Activated CD8-positive, alpha-beta T cell treated with anti-CD3 and anti-CD28 coated beads for 36 hours (primary cell): ENCODE measurements at regions of chr10 and their contacts with region 1.

Region 1: DNA sequence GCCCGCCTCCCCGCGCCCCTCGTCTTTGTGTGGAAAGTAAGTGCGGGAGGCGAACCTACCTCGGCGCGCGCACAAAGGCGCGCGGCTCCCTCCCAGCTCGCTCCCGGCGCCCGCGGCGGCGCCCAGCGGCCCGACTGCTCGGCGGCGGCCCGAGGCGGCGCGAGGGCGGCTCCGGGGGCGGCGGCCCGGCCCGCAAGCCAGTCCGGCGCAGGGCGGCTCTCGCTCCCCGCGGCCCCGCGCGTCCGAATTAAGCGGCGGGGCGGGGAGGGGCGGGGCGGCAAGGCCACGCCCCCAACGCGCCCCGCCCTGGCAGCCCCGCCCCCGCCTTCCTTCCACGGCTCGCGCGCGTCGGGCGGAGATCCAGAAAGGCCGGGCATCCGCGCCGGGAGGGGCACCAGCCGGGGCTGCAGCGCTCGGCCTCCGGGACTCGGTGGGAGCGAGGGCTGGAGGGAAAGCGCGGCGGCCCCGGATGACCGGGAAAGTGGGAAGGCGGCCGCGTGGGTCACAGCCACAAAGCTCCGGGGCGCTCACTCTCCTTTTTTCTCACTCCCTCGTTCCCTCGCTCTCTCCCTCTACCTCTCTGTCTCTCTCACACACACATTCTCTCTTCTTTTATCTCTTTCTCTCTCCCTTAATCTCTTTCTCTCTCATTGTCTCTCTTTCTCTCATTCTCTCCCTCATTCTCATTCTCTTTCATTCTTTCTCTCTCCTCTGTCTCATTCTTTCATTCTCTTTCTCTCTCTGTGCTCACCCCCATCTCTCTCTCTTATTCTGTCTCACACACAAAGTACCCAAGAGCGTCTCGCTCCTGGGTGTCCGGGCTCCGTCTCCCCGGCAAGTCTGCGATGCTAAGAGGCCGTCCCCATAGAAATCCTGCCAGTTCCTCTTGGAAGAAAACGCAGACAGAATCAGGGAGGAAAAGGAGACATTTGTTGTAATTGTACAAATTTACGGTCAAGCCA is 170.2 kb downstream of the FAM107B start:
- DNase-seq: peak; percentile 73
- ATAC-seq: peak; percentile 57
- H3K4me3 Mint-ChIP-seq: peak overlapping the region; percentile 84
- H3K27ac Mint-ChIP-seq: peak overlapping the region; percentile 93
- H3K4me1 Mint-ChIP-seq: peaks cover 65% of the 10 kb centered on the region
- H3K27me3 Mint-ChIP-seq: no peaks in the 10 kb centered on the region
- CTCF ChIP-seq: no peak

Region 2: GRCh38 chr10:14429043-14429700 is 175.3 kb before region 1 on chr10:
- CTCF ChIA-PET with region 1: no interaction called
- POLR2A ChIA-PET with region 1: no interaction called
- intact Hi-C with region 1: no loop called
- DNase-seq: no peak
- ATAC-seq: no peak
- H3K4me3 Mint-ChIP-seq: no peak overlapping the region
- H3K27ac Mint-ChIP-seq: no peak overlapping the region
- H3K4me1 Mint-ChIP-seq: no peaks in the 10 kb centered on the region
- H3K27me3 Mint-ChIP-seq: peaks cover 30% of the 10 kb centered on the region
- CTCF ChIP-seq: no peak

Region 3: GRCh38 chr10:14588084-14588937 is 16.2 kb before region 1 on chr10:
- CTCF ChIA-PET with region 1: interaction called, 11 read pairs
- POLR2A ChIA-PET with region 1: interaction called, 17 read pairs
- intact Hi-C with region 1: loop called (anchors 2 kb)
- DNase-seq: peak; percentile 78
- ATAC-seq: peak; percentile 57
- H3K4me3 Mint-ChIP-seq: peak overlapping the region; percentile 52
- H3K27ac Mint-ChIP-seq: peak overlapping the region; percentile 97
- H3K4me1 Mint-ChIP-seq: peaks cover 90% of the 10 kb centered on the region
- H3K27me3 Mint-ChIP-seq: no peaks in the 10 kb centered on the region
- CTCF ChIP-seq: no peak

Region 4: GRCh38 chr10:14648005-14648765 is 43.7 kb after region 1 on chr10:
- CTCF ChIA-PET with region 1: no interaction called
- POLR2A ChIA-PET with region 1: interaction called, 6 read pairs
- intact Hi-C with region 1: loop called (anchors 2 kb)
- DNase-seq: peak; percentile 81
- ATAC-seq: peak; percentile 80
- H3K4me3 Mint-ChIP-seq: peak overlapping the region; percentile 72
- H3K27ac Mint-ChIP-seq: peak overlapping the region; percentile 98
- H3K4me1 Mint-ChIP-seq: peaks cover 56% of the 10 kb centered on the region
- H3K27me3 Mint-ChIP-seq: no peaks in the 10 kb centered on the region
- CTCF ChIP-seq: no peak